HEK293 (cell line): ENCODE measurements at regions of chrX and their contacts with region 1.

Region 1: GRCh38 chrX:76454456-76454927 is 27.0 kb downstream of the MAGEE1 start:
- H3K4me3 ChIP-seq: no peak overlapping the region
- H3K27ac ChIP-seq: no peak overlapping the region
- H3K4me1 ChIP-seq: no peaks in the 10 kb centered on the region
- CTCF ChIP-seq: peak; percentile 21; the same call in 1 of the 2 replicates

Region 2: GRCh38 chrX:76279000-76279399 is 175.5 kb before region 1 on chrX:
- CTCF ChIA-PET with region 1: interaction called, 20 read pairs
- POLR2A ChIA-PET with region 1: no interaction called
- H3K4me3 ChIP-seq: no peak overlapping the region
- H3K27ac ChIP-seq: no peak overlapping the region
- H3K4me1 ChIP-seq: no peaks in the 10 kb centered on the region
- CTCF ChIP-seq: peak; percentile 72

Region 3: GRCh38 chrX:76427560-76428242 is 26.8 kb before region 1 on chrX and contains the start of gene MAGEE1:
- CTCF ChIA-PET with region 1: no interaction called
- POLR2A ChIA-PET with region 1: no interaction called
- H3K4me3 ChIP-seq: peak within 1 kb of the TSS; percentile 41
- H3K27ac ChIP-seq: no peak within 1 kb of the TSS
- H3K4me1 ChIP-seq: no peaks in the 10 kb centered on the region
- CTCF ChIP-seq: no peak

Region 4: GRCh38 chrX:76439188-76439587 is 15.3 kb before region 1 on chrX:
- CTCF ChIA-PET with region 1: interaction called, 13 read pairs
- POLR2A ChIA-PET with region 1: no interaction called
- H3K4me3 ChIP-seq: no peak overlapping the region
- H3K27ac ChIP-seq: no peak overlapping the region
- H3K4me1 ChIP-seq: no peaks in the 10 kb centered on the region
- CTCF ChIP-seq: no peak

Region 5: GRCh38 chrX:76538860-76539259 is 84.4 kb after region 1 on chrX:
- CTCF ChIA-PET with region 1: no interaction called
- POLR2A ChIA-PET with region 1: no interaction called
- H3K4me3 ChIP-seq: no peak overlapping the region
- H3K27ac ChIP-seq: no peak overlapping the region
- H3K4me1 ChIP-seq: no peaks in the 10 kb centered on the region
- CTCF ChIP-seq: no peak